ENCODE measurements at regions of chr12 and their contacts with region 1.

Region 1: DNA sequence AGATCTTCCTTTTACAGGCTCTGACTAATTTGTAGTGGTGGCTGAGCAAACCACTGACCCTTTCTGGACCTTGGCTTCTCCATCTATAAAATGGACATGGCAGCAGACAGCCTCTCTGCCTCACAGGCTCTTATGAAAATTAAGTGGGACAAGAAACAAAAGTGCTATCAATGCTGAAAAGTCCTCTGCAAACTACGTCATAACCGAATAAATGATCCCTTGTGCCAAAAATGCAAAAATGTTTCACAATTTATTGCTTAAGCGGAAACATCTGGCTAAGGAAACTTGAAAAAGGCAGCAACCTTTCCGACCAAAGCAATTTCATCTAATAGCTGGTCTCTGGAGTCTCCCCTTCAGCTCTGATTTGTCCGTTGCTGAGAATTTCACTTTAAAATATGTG is 108.5 kb upstream of the PLXNC1 start:
- DNase-seq: no peak
- ATAC-seq: peak in 7 of 8 donors; percentile 23 to 78 (median 59)
- H3K4me3 ChIP-seq: no peak overlapping the region
- H3K27ac ChIP-seq: peak overlapping the region in 2 of 10 donors; percentile 20 to 57
- H3K4me1 ChIP-seq: peaks cover 0 to 14% (median 0%) of the 10 kb centered on the region in 9 donors
- H3K27me3 ChIP-seq: no peaks in the 10 kb centered on the region
- CTCF ChIP-seq: no peak

Region 2: DNA sequence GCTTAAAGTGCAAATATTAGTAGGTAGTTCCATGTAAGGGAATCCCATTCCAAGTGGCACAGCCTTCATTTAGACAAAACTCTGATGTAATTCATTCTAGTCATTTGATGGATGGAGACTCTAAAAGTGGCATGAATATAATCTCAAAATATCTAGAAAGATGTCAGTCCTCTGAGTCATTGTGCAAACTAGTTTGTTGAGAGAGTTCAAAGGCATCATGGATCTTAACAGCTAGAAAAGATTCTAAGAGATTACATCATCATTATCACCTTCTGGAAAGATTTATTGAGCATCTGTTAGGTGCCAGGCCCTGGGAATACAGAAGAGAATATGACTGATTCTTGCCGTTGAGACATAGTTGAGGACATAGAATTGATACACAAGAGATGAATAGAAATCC is 332.1 kb before region 1 on chr12:
- intact Hi-C with region 1: no loop called
- DNase-seq: no peak
- ATAC-seq: no peak
- H3K4me3 ChIP-seq: no peak overlapping the region
- H3K27ac ChIP-seq: peak overlapping the region in 1 of 10 donors; percentile 26
- H3K4me1 ChIP-seq: peaks cover 0 to 51% (median 32%) of the 10 kb centered on the region in 9 donors
- H3K27me3 ChIP-seq: no peaks in the 10 kb centered on the region
- CTCF ChIP-seq: no peak

Region 3: DNA sequence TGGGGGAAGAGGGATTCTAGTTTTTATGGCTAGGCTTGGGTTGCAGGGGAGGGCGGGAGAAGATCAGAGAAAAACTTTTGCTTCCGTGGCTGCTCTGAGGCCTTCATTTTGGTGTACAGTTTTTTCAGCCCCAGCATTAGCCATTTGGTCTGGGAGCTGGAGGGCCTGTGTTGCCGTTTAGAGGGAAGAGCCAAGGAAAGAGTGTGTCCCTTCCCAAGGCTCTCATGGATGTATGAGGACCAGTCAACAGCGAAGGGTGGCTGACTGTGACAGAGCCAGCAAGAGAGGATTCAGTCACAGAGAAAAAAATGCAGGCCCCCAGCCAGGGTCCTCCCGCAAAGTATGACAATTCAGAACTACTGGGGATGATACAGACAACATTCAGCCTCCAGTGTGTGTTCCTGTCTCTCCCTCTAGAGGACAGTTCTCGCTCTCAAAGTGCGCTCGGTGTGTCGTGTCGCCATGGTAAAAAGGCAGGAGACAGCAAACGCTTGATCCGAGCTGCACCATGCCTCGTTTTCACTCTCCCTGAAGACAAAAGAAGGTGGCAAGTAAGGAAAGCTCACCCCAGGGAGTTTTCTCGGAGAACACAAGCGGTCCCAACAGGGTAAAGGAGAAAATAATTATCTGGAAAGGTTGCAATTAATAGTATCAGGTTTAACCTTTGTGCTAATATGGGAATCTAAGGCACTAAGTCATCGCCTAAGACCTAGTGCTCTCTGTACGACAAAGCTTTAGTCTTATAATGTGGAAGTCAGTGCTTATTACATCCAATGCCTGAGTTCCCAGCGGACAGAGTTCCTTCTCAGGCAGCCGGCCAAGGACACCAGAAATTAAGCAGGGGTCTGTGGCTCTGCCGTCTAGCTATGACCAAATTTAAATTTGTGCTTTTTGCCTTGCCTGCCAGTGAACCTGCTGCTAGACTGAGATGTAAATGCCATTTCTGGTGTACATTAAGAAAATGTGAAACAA is 48.8 kb before region 1 on chr12:
- intact Hi-C with region 1: loop called in 1 of 10 experiments (anchors 5 kb)
- DNase-seq: peak; percentile 41 to 68
- ATAC-seq: peak; percentile 60 to 97 (median 94)
- H3K4me3 ChIP-seq: peak overlapping the region in 6 of 10 donors; percentile 22 to 33 (median 28)
- H3K27ac ChIP-seq: peak overlapping the region in 9 of 10 donors; percentile 27 to 72 (median 51)
- H3K4me1 ChIP-seq: peaks cover 0 to 23% (median 12%) of the 10 kb centered on the region in 9 donors
- H3K27me3 ChIP-seq: no peaks in the 10 kb centered on the region
- CTCF ChIP-seq: peak; percentile 19 to 74 (median 49)

Measured in heart right ventricle (tissue), 16 donors.